Activated CD8-positive, alpha-beta T cell treated with anti-CD3 and anti-CD28 coated beads, Interleukin-2, amount 10 ng/mL, durations not matched to agents 7 days and 5 days (primary cell): ENCODE measurements at regions of chr13 and their contacts with region 1.

Region 1: DNA sequence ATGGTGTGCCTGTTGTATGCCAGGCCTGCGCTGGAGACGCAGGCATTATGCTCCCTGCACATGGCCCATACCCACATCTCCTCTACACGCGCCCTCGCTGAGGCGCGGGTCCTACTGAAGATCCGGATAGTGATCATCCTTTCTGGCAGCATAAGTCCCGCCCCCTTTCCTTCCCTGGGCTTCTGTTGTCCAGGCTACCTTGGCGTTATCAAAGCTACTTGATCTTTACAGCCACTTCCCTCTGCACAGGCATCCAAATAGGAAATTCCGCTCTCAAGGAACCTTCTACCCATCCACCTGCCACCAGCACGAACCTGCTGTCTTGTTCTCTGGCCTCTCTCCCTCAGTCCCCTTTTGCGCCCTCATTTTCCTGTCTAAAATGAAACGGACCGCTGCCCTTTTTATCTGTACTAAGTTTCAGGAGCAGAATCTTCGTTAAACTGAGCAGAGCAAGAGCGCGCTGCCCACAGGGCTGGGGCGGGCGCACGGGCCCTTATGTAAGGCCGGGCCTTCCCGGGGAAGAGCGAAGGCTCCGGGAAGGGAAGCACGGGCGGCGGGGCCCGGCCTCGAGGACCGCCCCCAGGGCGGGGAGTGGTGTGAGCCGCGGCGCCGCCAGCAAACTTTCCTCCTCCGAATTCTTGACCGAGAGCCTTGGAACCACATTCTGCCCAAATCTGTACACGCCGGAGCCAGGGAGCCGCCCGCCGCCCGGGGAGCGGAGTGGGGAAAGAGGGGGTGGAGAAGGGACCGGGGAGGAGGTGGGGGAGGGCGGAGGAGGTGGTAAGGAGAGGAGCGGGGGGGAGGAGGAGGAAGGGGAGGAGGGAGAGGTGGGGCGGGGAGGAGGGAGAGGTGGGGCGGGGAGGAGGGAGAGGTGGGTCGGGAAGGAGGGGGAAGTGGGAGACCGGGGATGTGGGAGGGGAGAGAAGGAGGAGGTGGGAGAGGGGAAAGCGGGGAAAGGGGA is 920 bp upstream of the UBE2L5 start:
- DNase-seq: peak; percentile 57
- ATAC-seq: peak; percentile 39
- H3K4me3 Mint-ChIP-seq: peak overlapping the region; percentile 82
- H3K27ac Mint-ChIP-seq: peak overlapping the region; percentile 61
- H3K4me1 Mint-ChIP-seq: peaks cover 13% of the 10 kb centered on the region
- H3K27me3 Mint-ChIP-seq: peaks cover 10% of the 10 kb centered on the region

Region 2: DNA sequence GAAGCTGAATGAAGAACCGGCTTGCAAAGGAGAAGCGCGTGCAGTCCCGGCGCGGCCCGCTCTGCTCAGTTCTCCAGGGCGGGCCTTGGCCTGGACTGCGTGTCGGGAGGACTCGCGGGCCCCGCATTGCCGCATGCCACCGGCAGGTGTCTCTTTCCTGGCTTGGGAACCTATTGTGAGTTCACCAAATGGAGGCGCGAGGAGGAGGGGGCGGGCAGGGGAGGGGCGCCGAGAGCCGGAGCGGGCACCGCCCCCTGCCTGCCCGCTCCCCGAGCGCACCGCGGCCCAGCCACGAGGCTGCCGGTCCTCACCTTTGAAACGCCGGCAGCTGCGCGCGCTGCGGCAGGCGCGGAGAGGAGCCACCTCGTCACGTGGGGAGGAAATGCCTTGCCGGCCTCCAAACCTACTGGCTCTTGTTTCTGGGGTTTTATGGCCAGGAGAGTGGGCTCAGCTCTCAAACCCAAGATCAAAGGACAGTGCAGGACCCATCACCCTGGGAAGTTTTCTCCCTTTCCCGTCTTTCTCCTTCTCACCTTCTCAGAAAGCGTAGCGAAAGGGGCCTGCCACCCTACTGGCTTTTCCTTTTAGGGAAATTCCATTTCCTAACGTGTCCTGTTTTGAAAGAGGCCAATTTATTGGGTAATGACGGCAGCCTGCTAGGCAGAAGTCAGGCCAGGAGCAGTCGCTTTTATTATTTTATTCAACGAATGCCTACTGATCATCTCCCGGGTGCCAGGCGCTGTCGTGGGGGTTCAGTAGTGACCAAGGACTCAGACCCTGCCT is 12.9 kb before region 1 on chr13:
- CTCF ChIA-PET with region 1: interaction called, 26 read pairs
- POLR2A ChIA-PET with region 1: interaction called, 3 read pairs
- DNase-seq: peak; percentile 93
- ATAC-seq: peak; percentile 97
- H3K4me3 Mint-ChIP-seq: peak overlapping the region; percentile 52
- H3K27ac Mint-ChIP-seq: peak overlapping the region; percentile 55
- H3K4me1 Mint-ChIP-seq: peaks cover 27% of the 10 kb centered on the region
- H3K27me3 Mint-ChIP-seq: peaks cover 10% of the 10 kb centered on the region